AG04449 (cell line): ENCODE measurements at regions of chr17 and their contacts with region 1.

Region 1: GRCh38 chr17:78300962-78301822 is 58.7 kb downstream of the SOCS3 start:
- DNase-seq: no peak
- H3K4me3 ChIP-seq: no peak overlapping the region
- CTCF ChIP-seq: no peak

Region 2: DNA sequence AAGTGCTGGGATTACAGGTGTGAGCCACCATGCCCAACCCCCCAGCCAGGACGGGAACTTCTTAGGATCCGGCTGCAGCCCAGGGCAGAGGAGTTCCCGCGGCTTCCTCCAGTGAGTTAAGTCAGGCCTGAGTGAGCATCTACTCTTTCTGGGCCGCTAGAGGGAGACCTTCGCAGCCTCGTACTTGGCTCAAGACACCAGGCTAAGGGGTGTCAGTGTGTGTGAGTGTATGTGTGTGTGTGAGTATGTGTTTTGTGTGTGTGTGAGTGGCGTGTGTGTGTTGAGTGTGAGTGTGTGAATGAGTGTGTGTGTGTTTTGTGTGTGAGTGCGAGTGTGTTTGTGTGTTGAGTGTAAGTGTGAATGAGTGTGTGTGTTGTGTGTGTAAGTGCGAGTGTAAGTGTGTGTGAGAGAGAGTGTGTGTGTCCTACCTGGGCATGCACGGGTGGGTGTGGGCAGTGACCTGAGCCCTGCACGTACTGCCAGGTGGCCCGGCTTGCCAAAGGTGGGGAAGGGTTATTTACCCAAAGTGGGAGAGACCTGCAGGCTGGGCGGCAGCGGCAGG is 11.3 kb before region 1 on chr17:
- CTCF ChIA-PET with region 1: interaction called, 19 read pairs
- POLR2A ChIA-PET with region 1: interaction called, 3 read pairs
- DNase-seq: peak; percentile 53
- H3K4me3 ChIP-seq: no peak overlapping the region
- CTCF ChIP-seq: peak; percentile 93

Region 3: DNA sequence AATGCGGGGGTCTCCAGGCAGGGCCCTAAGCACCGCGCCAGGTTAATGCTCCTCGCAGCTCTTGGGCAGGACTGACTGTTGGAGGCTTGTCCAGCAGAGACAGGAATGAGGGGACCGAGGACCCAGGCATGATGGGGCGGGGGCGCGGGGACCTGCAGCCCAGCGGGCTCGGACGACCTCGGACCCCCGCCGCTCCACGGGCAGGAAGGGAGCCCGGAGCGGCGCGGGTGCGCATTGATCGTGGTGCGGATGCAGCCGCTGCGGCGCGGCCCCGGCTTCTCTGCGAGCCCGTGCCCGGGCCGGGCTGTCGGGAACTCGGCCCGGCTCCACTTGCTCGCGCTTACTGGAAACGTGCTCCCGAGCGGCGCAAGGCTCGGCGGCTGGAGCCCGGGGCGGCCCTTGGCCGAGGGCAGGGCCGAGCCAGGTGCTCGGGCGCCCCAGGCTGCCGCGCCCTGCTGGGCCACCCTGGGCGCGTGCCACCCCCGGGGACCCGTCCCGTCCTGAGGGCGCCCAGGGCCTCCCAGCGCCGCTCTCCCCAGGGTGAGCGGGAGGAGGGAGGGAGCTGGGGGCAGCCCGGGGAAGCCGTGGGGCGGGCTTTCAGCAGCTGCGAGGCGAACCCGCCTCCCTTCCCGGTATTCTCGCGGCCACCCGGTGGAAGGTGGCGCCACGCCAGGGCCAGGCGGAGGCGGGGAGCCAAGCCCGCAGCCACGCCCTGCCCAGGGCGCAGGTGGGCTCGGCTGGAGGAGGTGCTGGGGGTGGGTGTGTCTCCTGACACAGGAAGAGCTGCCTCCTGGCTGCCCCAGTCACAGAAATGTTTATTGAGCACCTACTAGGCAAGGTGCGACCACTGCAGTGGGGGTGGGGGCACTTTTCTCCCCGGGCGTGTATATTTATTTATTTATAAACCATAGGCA is 12.8 kb after region 1 on chr17:
- CTCF ChIA-PET with region 1: interaction called, 15 read pairs
- POLR2A ChIA-PET with region 1: no interaction called
- DNase-seq: no peak
- H3K4me3 ChIP-seq: peak overlapping the region; percentile 43
- CTCF ChIP-seq: no peak

Region 4: GRCh38 chr17:78375401-78376151 is 74.4 kb after region 1 on chr17:
- CTCF ChIA-PET with region 1: no interaction called
- POLR2A ChIA-PET with region 1: no interaction called
- DNase-seq: no peak
- H3K4me3 ChIP-seq: no peak overlapping the region
- CTCF ChIP-seq: no peak